Activated naive CD4-positive, alpha-beta T cell treated with anti-CD3 and anti-CD28 coated beads, Interleukin-2, amount 10 ng/mL, durations not matched to agents 7 days and 5 days (primary cell): ENCODE measurements at regions of chr11 and their contacts with region 1.

Region 1: GRCh38 chr11:60831143-60831500 is 10.8 kb upstream of the CCDC86 start:
- DNase-seq: peak; percentile 88
- H3K4me3 Mint-ChIP-seq: no peak overlapping the region
- H3K27ac Mint-ChIP-seq: no peak overlapping the region
- H3K4me1 Mint-ChIP-seq: peaks cover 13% of the 10 kb centered on the region
- H3K27me3 Mint-ChIP-seq: peaks cover 34% of the 10 kb centered on the region

Region 2: DNA sequence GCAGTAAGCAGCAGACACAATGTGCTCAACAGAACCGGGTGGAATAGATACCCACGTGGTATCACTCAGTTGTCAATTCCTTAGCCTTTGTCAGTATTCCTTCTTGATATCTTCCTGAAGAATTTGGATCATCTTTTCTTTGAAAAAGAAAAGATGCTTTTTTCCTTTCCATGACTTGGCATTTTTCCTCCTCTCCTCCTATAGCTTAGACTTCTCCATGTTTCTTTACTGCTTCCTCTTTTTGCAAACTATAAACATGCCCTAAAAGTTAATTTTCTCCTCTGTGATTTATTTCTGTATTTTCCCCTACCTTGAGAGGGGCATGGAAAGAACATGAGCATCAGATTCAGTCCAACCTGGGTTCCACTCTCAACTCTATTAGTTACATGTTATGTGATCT is 997.5 kb before region 1 on chr11:
- CTCF ChIA-PET with region 1: no interaction called
- DNase-seq: no peak
- H3K4me3 Mint-ChIP-seq: no peak overlapping the region
- H3K27ac Mint-ChIP-seq: no peak overlapping the region
- H3K4me1 Mint-ChIP-seq: no peaks in the 10 kb centered on the region
- H3K27me3 Mint-ChIP-seq: peaks cover 4% of the 10 kb centered on the region

Region 3: GRCh38 chr11:60717956-60718355 is 113.2 kb before region 1 on chr11:
- CTCF ChIA-PET with region 1: no interaction called
- DNase-seq: no peak
- H3K4me3 Mint-ChIP-seq: no peak overlapping the region
- H3K27ac Mint-ChIP-seq: no peak overlapping the region
- H3K4me1 Mint-ChIP-seq: no peaks in the 10 kb centered on the region
- H3K27me3 Mint-ChIP-seq: peaks cover 14% of the 10 kb centered on the region

Region 4: GRCh38 chr11:60775420-60775961 is 55.6 kb before region 1 on chr11:
- CTCF ChIA-PET with region 1: interaction called, 16 read pairs
- DNase-seq: peak; percentile 90
- H3K4me3 Mint-ChIP-seq: no peak overlapping the region
- H3K27ac Mint-ChIP-seq: peak overlapping the region; percentile 58
- H3K4me1 Mint-ChIP-seq: peaks cover 7% of the 10 kb centered on the region
- H3K27me3 Mint-ChIP-seq: peaks cover 33% of the 10 kb centered on the region

Region 5: DNA sequence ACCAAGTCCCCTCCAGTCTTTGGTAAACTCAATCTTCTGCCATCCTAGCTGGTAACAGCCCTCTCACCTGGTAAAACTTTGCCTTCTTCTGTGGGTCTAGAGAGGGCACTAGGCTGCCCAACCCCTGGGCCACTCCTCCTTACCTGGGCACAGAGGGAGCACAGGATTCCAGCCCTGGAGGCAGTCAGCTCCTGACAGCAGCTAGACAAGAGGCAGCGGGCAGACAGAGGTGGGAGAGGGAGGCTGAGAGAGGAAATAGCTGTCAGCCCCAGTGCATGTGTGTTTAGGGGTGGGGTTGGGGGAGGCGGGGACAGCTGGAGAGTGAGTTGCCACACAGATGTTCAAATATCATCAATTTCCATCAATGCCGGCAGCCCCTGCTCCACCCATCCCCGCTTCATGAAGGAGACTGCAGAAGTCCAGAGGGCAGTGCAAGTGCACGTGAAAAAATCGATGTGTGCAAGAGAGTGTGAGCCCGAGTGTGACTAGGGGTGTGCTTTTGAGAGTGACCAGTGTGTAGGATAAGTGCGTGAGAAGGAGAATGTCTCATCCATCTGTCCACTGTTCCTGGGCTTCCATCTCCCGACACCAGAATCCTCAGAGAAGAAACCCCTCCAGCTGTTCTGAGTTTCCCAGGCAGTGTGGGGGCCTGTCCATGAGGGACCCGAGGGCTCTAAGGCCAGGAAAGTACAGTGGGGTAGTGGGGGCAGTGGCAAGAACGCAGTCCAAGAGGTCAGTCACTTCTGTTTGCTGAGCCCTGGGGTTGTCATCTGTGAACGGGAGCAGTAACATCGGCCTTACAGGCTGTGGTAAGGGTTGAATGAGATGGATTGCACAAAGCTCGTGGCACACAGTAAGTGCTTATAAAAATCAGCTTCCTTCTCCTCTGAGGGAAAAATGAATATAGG is 24.9 kb after region 1 on chr11 and contains the start of gene PTGDR2:
- CTCF ChIA-PET with region 1: interaction called, 12 read pairs
- DNase-seq: peak; percentile 37
- H3K4me3 Mint-ChIP-seq: no peak within 1 kb of the TSS
- H3K27ac Mint-ChIP-seq: no peak within 1 kb of the TSS
- H3K4me1 Mint-ChIP-seq: peaks cover 38% of the 10 kb centered on the region
- H3K27me3 Mint-ChIP-seq: peaks cover 23% of the 10 kb centered on the region

Region 6: DNA sequence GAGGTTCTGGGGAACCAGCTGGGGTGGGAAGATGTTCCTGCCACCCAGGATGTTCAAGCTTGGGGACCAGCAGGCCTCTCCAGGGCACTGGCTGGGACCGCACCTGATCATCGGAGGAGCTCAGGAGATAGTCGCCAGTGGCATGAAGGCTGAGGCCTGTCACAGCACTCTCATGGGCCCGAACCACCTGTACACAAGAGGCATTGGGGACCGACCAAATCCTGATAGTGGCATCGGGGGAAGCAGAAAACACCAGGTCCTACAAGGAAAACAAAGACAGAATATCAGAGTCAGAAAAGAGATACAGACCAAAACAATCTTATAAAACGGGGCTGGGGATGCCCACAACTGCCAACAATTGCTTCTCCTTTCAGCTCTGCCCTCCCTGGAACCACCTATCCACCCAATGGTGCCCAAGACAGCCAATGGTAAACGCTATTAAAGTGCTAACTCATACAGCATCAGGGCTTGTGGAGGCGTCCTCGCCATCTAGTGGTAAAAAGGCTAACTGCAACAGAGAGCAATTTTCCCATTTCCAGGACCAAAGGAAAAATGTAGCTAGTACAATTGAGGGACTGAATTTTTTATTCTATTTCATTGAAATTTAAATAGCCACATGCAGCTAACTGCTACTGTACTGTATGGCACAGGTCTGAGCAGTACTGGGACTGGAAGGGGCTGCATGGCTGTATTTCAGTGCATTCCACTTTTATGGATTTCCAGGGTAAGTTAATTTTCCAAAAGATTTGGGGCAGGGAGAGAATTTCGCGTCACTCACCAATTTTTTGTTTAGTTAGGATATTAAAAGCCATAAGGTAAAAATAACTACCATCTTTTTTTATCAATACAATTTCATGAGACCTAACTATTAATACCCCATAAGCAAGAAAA is 68.2 kb after region 1 on chr11:
- CTCF ChIA-PET with region 1: interaction called, 100 read pairs
- DNase-seq: peak; percentile 45
- H3K4me3 Mint-ChIP-seq: no peak overlapping the region
- H3K27ac Mint-ChIP-seq: peak overlapping the region; percentile 15
- H3K4me1 Mint-ChIP-seq: peaks cover 7% of the 10 kb centered on the region
- H3K27me3 Mint-ChIP-seq: no peaks in the 10 kb centered on the region

Region 7: DNA sequence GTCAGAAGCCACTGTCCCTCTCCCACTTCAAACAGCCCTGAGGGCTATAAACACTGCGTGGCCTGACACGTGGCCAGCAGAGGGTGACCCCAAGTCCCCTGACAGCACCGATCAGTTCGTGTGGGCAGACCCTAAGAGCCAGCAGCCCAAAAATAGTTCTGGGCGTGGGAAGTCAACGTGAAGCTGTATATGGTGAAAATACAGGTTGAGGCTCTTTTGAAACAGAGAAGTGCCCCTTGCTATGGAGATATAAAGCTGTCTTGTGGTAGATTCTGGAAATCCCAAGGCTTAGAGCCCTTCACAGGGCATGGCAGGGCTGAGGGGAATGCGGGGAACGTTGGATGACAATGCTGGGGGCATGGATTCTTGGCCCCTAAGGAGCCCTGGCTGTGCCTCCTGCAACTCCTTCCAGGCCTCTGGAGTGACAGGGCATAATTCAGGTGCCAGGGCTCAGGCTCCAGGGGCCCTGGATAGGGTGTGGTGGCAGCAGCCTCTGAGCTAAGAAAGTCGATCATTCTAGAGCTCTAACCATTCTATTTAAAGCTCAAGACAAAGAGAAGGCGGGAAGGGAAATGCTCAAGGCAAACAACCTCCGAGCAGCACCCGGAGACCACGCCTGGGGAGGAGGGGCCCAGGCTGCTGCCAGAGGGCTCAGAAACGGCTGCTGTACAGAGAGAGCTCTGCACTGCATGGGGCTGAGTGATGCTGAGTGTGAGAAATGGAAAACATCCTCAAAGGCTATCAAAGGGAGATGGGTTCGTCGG is 210.8 kb after region 1 on chr11:
- CTCF ChIA-PET with region 1: no interaction called
- DNase-seq: peak; percentile 96
- H3K4me3 Mint-ChIP-seq: peak overlapping the region; percentile 60
- H3K27ac Mint-ChIP-seq: peak overlapping the region; percentile 100
- H3K4me1 Mint-ChIP-seq: peaks cover 74% of the 10 kb centered on the region
- H3K27me3 Mint-ChIP-seq: no peaks in the 10 kb centered on the region

Region 8: GRCh38 chr11:61129639-61130523 is 298.8 kb after region 1 on chr11:
- CTCF ChIA-PET with region 1: interaction called, 10 read pairs
- DNase-seq: peak; percentile 94
- H3K4me3 Mint-ChIP-seq: no peak overlapping the region
- H3K27ac Mint-ChIP-seq: peak overlapping the region; percentile 51
- H3K4me1 Mint-ChIP-seq: peaks cover 22% of the 10 kb centered on the region
- H3K27me3 Mint-ChIP-seq: no peaks in the 10 kb centered on the region